Activated naive CD4-positive, alpha-beta T cell treated with anti-CD3 and anti-CD28 coated beads for 36 hours (primary cell): ENCODE measurements at regions of chr17 and their contacts with region 1.

Region 1: GRCh38 chr17:2401426-2402221 is 764 bp upstream of the MNT start:
- DNase-seq: peak; percentile 100
- H3K4me3 Mint-ChIP-seq: peak overlapping the region; percentile 98
- H3K27ac Mint-ChIP-seq: peak overlapping the region; percentile 96
- H3K4me1 Mint-ChIP-seq: peaks cover 37% of the 10 kb centered on the region
- H3K27me3 Mint-ChIP-seq: no peaks in the 10 kb centered on the region

Region 2: DNA sequence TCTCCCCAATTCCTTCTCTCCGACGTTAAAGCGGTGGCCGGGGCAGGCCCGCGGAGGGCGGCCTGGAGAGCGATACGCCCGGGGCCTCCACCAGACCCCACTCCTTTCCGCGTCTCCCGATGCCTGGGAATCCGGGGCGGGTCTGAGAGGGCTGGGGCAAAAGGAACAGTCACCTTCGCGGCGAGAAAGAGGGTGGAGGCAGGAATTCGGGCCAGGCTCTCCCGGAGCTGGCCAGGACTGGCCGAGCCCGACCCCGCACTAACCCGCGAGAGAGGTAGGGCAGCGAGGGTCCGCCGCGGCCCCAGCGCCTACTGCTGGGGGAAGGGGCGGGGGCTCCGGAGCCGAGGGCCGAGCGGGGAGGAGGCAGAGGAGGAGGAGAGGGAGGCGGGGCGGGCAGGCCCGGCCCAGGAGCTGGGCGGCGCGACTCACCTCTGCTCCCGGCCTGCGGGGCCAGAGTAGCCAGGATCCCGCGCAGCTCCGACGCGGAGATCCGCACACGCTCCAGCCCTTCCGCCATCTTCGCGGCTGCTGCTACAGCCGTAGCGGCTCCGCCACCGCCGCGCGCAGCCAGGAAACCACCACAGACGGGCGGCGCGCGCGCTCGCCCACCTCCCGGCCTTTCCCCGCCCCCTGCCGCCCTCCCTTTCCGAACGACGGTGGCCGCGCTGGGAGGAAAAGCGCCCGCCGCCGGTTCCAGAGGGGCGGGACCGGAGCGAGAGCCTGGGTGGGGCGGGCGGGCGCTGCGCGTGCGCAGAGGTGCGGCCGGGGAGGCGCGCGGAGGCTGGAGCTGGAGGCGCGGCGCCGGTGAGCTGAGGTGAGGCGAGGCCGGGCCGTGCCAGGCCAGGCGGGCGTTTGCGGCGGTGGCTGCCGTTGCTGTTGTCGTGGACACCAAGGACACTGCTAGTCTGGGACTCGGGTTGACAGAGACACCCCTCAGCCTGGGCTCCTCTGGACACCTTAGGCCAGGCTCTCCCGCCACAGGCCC is 98.1 kb before region 1 on chr17 and contains the starts of genes SMG6 and SRR:
- CTCF ChIA-PET with region 1: interaction called, 4 read pairs
- intact Hi-C with region 1: loop called (anchors 1 kb)
- DNase-seq: peak; percentile 95
- H3K4me3 Mint-ChIP-seq: peak within 1 kb of the TSS; percentile 91
- H3K27ac Mint-ChIP-seq: peak within 1 kb of the TSS; percentile 70
- H3K4me1 Mint-ChIP-seq: peaks cover 45% of the 10 kb centered on the region
- H3K27me3 Mint-ChIP-seq: no peaks in the 10 kb centered on the region
- total RNA-seq, gene SMG6: 18.8 to 20.7 TPM
- total RNA-seq, gene SRR: 8.9 to 10.2 TPM

Region 3: DNA sequence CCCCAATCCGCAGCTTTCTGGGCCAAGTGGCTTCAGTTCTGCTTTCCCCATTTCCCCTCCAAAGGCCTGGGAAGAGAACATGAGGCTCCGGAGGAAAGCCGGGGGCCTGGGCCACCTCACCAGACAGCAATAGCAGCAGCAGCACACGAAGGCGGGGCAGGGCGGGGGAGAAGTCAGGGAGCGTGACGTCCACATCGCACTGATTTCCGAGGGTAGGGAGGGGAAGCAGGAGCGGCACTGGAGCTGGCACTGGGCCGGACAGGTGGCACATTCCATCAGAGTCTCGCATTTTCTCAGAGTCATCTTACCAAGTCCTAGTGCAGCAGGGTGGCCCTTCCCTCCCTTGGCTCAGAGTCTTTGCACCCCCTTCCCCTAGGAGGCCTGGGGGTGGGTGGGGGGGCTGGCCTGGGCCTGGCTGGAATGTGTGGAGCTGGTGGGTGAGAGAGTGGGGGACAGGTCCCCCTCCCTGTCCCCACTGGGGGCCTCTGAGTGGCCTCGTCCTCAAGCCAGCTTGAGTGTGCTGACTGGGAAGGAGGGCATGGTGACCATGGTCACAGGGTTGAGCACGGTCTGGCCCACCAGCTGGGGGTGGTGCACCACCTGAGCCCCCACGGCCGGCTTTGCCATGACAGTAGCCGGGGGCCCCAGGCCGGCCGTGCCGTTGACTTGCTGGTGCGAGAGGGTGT is 15.1 kb before region 1 on chr17:
- CTCF ChIA-PET with region 1: interaction called, 26 read pairs
- intact Hi-C with region 1: loop called (anchors 1 kb)
- DNase-seq: no peak
- H3K4me3 Mint-ChIP-seq: no peak overlapping the region
- H3K27ac Mint-ChIP-seq: no peak overlapping the region
- H3K4me1 Mint-ChIP-seq: peaks cover 22% of the 10 kb centered on the region
- H3K27me3 Mint-ChIP-seq: no peaks in the 10 kb centered on the region

Region 4: DNA sequence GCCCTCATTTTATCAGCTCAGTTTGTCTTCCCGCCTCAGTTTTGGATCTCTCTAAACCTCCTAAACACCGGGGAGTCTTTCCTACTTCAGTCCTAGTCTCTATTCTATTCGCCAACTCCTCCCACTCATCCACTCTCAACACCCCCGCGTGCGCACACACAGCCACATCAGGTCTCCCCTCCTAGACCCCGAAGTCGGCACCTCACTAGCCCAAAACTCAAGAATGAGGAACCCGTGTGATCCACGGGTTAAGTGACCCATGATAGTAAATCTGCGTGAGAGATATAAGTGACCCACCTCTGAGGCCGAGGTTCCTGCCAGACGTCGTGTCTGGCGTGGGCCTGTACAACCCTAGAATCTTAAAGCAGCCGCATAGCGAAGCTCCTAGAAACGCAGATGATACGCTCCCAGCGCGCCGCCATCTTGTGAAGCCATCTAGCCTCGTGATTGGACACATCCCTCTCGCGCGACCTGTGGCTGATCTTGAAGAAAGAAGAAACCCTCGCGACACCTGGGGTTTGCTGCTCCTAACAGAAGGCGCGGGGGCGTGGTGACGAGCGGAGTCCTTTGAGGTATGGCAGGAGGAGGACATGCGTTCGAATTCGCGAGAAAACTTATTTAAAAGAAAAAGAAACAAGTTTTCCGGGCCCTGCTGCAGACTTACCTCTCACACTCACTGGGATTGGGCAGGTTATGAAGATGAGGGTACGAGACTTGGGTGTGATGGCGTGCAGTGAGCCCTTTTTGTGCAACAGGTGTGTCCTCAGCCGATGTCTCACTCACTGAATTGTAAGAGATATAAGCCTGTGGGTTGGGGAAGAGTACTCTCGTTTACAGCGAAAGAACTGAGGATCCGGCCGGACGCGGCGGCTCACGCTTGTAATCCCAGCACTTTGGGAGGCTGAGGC is 110.1 kb after region 1 on chr17 and contains the start of gene METTL16:
- CTCF ChIA-PET with region 1: no interaction called
- intact Hi-C with region 1: loop called (anchors 1 kb)
- DNase-seq: peak; percentile 100
- H3K4me3 Mint-ChIP-seq: no peak within 1 kb of the TSS
- H3K27ac Mint-ChIP-seq: peak within 1 kb of the TSS; percentile 47
- H3K4me1 Mint-ChIP-seq: peaks cover 18% of the 10 kb centered on the region
- H3K27me3 Mint-ChIP-seq: no peaks in the 10 kb centered on the region
- total RNA-seq, gene METTL16: 44.8 to 45.5 TPM

Region 5: GRCh38 chr17:2711601-2712299 is 310.1 kb after region 1 on chr17 and contains the start of gene CLUH:
- CTCF ChIA-PET with region 1: no interaction called
- intact Hi-C with region 1: loop called (anchors 1 kb)
- DNase-seq: peak; percentile 96
- H3K4me3 Mint-ChIP-seq: peak within 1 kb of the TSS; percentile 88
- H3K27ac Mint-ChIP-seq: peak within 1 kb of the TSS; percentile 82
- H3K4me1 Mint-ChIP-seq: peaks cover 32% of the 10 kb centered on the region
- H3K27me3 Mint-ChIP-seq: no peaks in the 10 kb centered on the region
- total RNA-seq, gene CLUH: 72.7 to 81.4 TPM